ENCODE measurements at regions of chr5 and their contacts with region 1.

Region 1: GRCh38 chr5:180470966-180471582 is 23.1 kb upstream of the CNOT6 start:
- DNase-seq: peak; percentile 61
- ATAC-seq: peak; percentile 43 to 62

Region 2: DNA sequence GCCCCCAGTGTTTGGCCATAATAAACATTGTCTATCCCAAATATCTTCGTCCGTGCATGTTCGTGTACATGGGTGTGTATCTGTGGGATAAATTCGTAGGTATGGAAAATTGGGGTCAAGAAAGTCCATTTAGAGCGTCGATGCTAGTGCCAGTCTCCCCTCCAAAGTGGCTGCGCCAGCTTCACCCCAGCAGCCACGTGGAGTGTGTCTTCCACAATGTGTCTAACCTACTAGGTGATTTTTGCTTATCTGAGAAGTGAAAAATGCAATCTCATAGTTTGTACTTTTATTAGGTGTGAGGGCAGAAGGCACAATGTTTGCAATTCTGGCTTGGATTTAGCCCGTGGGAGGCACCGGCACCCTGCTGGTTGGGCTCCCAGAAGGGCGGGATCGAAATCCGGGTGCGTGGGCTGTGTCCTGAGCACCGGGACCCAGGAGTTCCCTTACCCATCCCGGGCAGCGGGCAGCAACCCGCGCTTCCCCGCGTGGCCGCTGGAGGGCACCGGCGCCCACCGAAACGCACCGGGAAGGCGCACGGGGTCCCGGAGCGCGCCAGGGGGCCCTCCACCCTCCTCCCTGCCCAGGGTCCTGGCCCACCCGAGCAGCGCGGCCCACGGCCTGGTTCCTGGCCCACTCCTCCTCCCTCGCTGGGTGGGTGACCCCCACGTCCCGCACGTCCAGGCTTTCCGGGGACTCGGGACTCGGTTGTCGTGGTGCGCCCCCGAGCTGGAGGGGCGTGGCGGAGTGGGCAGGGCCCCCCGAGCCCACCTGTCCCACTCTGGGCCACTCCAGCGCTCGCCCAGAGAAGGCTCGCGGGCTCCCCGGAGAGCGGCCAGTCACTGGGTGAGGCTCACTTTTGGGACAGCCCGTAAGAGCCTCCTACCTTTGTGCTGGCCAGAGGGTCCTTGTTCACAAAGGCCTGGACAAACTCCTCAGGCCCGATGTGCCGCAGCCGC is 344.1 kb before region 1 on chr5:
- intact Hi-C with region 1: loop called (anchors 2 to 10 kb)
- DNase-seq: no peak
- ATAC-seq: peak; percentile 65 to 71

Region 3: DNA sequence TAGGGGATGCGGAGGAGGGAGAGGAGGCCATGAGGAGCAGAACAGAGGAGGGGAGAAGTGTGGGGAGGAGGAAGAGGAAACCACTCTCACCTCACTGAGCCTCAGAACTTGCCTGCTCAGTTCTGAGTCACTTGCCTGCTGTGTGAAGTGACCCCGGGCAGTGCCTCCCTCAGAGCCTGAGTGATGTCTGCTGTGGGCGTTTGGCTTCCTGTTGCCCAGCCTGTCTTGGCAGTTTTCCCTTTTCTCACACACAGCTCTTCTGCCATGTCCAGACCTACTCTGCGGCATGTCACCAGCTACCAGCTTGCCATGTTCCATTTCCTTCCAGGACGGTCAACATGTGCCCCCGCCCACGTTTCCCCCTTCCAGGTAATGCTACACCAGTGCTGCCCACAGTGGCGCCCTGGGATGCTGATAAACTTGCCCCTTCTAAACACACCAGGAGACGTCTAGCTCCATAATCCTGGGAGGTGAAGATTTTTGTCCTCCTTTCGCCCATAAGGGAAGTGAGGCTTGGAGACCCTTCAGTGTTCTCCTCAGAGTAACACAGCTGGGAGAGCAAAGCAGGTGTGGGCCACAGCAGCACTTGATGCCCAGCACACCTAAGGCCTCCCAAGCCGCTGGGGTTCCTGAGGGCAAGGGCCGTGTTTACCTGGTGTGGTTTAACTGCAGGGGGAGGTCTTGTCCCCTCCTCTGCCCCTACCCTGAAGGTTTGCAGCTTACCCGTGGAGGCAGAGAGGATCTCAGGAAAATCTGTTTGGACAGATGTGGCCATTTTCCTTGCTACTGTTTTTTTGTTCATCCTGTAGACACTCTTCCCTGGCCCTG is 335.7 kb before region 1 on chr5:
- intact Hi-C with region 1: loop called in 1 of 2 experiments (anchors 10 kb)
- DNase-seq: no peak
- ATAC-seq: peak in 1 of 2 donors; percentile 38

Region 4: GRCh38 chr5:180291943-180292831 is 178.9 kb before region 1 on chr5 and contains the start of gene MAPK9:
- intact Hi-C with region 1: loop called (anchors 1 to 5 kb)
- DNase-seq: peak; percentile 89
- ATAC-seq: peak; percentile 91 to 94
- total RNA-seq, gene MAPK9: 33.8 to 38.8 TPM